PC-3 (cell line): ENCODE measurements at regions of chr5 and their contacts with region 1.

Region 1: DNA sequence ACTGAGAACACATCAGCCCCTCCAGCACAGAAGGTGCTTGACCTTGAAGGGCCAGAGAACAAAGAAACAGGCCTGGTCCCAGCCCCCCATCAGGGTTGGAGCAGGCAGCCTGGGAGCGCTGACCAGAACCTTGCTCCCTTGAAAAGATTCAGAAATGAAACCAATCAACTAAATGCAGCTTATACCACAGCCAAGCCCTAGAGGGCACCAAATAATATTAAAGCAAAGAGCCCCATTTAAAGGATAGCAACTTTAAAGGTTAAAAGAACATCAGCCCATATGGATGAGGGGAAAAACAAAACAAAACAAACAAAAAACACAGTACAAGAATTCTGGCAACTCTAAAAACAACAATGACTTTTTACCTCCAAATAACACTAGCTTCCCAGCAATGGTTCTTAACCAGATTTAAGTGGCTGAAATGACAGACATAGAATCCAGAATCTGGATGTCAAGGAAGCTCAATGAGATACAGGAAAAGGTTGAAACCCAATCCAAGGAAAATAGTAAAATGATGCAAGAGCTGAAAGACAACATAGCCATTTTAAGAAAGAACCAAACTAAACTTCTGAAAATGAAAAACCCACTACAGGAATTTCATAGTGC is 471.9 kb downstream of the MTRR start:
- DNase-seq: peak; percentile 75
- ATAC-seq: peak; percentile 55; the same call in 1 of the 2 replicates
- H3K4me3 ChIP-seq: peak overlapping the region; percentile 31; the same call in 1 of the 2 replicates
- H3K27ac ChIP-seq: no peak overlapping the region
- H3K4me1 ChIP-seq: peaks cover 6% of the 10 kb centered on the region; the same call in 1 of the 2 replicates
- H3K27me3 ChIP-seq: no peaks in the 10 kb centered on the region
- CTCF ChIP-seq: peak; percentile 97

Region 2: GRCh38 chr5:8254674-8255073 is 86.2 kb before region 1 on chr5:
- CTCF ChIA-PET with region 1: no interaction called
- POLR2A ChIA-PET with region 1: no interaction called
- intact Hi-C with region 1: loop called (anchors 5 kb)
- DNase-seq: peak; percentile 98
- ATAC-seq: peak; percentile 80
- H3K4me3 ChIP-seq: peak overlapping the region; percentile 7; the same call in 1 of the 2 replicates
- H3K27ac ChIP-seq: peak overlapping the region; percentile 80
- H3K4me1 ChIP-seq: peaks cover 29% of the 10 kb centered on the region
- H3K27me3 ChIP-seq: no peaks in the 10 kb centered on the region
- CTCF ChIP-seq: peak; percentile 23; the same call in 1 of the 2 replicates

Region 3: DNA sequence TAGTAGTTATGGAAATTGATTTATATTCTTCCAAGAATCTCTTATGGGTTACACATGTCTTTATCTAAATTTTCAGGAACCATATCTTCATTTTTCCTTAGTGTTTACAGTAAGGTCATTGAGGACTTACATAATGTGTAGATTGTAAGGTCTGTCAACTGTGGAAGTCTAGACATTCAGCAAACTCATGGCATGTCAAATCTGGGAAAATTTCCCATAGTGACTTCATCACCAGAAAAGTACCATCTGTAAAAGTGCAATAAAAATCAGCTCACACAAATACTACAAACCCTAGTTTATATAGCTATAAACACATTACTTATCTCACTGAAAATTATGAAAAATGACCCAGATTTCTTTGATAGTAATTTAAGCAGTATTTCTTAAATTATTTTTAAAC is 52.5 kb before region 1 on chr5:
- CTCF ChIA-PET with region 1: no interaction called
- POLR2A ChIA-PET with region 1: no interaction called
- intact Hi-C with region 1: no loop called
- DNase-seq: peak; percentile 28
- ATAC-seq: peak; percentile 73
- H3K4me3 ChIP-seq: no peak overlapping the region
- H3K27ac ChIP-seq: no peak overlapping the region
- H3K4me1 ChIP-seq: no peaks in the 10 kb centered on the region
- H3K27me3 ChIP-seq: no peaks in the 10 kb centered on the region; the same call in 1 of the 2 replicates
- CTCF ChIP-seq: no peak

Region 4: DNA sequence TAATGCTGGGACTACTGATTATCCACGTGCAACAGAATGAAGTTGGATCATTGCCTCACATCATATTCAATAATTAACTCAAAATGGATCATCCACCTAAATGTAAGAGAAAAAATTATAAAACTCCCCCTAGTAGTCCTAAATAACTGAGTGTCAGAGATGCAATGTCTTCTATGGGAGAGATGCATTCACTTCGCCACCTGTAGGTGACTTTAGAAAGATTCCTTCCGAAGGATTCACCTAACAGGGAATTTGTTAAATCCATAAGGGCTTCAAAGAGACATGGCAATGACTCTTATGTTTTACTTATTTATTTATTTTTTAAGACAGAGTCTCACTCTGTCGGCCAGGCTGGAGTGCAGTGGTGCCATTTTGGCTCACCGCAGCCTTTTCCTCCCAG is 54.1 kb after region 1 on chr5:
- CTCF ChIA-PET with region 1: interaction called, 3 read pairs
- POLR2A ChIA-PET with region 1: no interaction called
- intact Hi-C with region 1: loop called (anchors 2 kb)
- DNase-seq: peak; percentile 71
- ATAC-seq: peak; percentile 56; the same call in 1 of the 2 replicates
- H3K4me3 ChIP-seq: no peak overlapping the region
- H3K27ac ChIP-seq: no peak overlapping the region
- H3K4me1 ChIP-seq: peaks cover 15% of the 10 kb centered on the region
- H3K27me3 ChIP-seq: no peaks in the 10 kb centered on the region
- CTCF ChIP-seq: peak; percentile 78

Region 5: GRCh38 chr5:8462565-8462964 is 121.7 kb after region 1 on chr5:
- CTCF ChIA-PET with region 1: no interaction called
- POLR2A ChIA-PET with region 1: no interaction called
- intact Hi-C with region 1: loop called (anchors 10 kb)
- DNase-seq: peak; percentile 68
- ATAC-seq: peak; percentile 81
- H3K4me3 ChIP-seq: no peak overlapping the region
- H3K27ac ChIP-seq: peak overlapping the region; percentile 54
- H3K4me1 ChIP-seq: peaks cover 16% of the 10 kb centered on the region
- H3K27me3 ChIP-seq: no peaks in the 10 kb centered on the region
- CTCF ChIP-seq: no peak